B cell (primary cell): ENCODE measurements at regions of chr16 and their contacts with region 1.

Region 1: DNA sequence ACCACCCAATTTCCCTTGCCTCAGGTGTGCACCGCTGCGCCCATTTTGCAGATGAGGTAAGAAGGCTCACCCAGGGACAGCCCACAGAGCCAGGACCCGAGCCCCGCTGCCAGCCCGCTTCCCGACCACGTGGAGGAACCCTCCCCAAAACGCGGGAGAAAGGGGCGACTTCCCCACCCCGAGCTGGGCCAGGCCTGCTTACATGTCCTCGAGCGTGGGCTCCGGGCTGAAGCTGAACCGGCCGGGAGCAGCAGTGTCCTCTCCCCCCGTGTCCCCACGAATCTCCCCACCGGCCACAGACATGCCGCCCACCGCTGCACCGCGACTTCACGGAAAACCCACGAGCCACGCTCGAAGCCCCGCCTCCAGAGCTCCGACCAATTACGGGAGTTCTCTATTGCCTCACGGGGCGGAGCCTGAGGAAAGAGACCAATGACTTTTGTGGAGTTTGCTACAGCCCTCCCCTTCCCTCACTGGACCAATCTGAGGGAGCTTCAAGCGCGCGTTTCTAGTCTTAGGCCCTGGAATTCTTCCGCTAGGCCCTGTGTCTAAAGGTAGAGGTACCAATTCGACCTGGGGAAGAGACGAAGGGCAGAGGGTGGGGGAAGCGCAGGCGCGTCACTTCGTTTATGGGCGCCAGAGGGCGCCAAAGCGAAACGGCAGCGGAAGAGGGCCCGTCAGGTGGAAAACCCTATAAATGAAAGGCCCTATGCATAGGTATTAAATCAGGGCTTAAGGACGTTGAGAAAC is at the start of gene DCTPP1:
- DNase-seq: peak; percentile 99
- ATAC-seq: peak; percentile 97
- H3K4me3 ChIP-seq: peak within 1 kb of the TSS; percentile 78 to 98 (median 85)
- H3K4me3 Mint-ChIP-seq: no peak within 1 kb of the TSS
- H3K27ac ChIP-seq: peak within 1 kb of the TSS; percentile 79 to 86
- H3K27ac Mint-ChIP-seq: peak within 1 kb of the TSS; percentile 20
- H3K4me1 ChIP-seq: peaks cover 12 to 21% of the 10 kb centered on the region in 2 donors
- H3K4me1 Mint-ChIP-seq: peaks cover 17% of the 10 kb centered on the region
- H3K27me3 ChIP-seq: no peaks in the 10 kb centered on the region
- H3K27me3 Mint-ChIP-seq: no peaks in the 10 kb centered on the region
- CTCF ChIP-seq: peak; percentile 82
- total RNA-seq, gene DCTPP1: 25.0 and 28.9 TPM in 2 replicates

Region 2: DNA sequence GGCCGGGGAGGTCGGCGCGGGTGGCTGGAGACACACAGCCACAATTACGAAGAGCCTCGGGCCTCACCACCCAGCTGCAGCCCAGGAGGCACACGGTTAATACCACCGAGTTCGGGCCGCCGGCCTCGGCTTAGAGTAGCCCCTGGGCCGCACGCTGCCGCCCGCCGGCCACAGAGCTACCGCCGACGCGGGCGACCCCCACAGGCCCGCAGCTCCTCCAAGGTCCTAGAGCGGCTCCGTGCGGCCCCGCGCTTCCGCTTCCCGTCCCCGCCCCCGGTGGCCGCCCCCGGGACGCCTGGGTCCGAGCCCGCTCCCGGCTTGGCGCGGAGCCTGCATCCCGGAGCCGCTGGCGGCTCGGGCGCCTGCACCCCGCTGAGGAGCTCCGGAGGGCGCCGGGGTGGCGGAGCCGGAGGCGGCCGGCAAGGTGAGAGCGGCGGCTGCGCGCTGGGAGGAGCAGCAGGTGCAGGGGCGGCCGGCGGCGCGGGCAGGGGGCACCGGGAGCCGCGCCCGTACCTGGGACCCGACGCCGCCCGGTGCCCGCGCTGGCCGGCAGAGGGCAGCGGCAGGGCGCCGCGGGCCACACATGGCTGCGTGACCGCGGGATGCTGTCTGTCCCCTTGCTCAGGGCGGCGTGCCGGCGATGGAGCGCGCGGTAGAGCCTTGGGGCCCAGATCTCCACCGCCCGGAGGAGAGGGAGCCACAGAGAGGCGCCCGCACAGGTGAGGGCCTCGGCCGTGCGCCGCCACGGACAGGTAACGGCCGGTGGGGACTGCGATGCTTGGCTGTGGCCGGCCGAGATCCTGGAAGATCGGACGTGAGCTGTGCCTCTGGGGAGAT is 34.5 kb before region 1 on chr16 and contains the start of gene ZNF48:
- CTCF ChIA-PET with region 1: interaction called, 15 read pairs
- POLR2A ChIA-PET with region 1: no interaction called
- intact Hi-C with region 1: no loop called
- DNase-seq: peak; percentile 87
- ATAC-seq: peak; percentile 95
- H3K4me3 ChIP-seq: peak within 1 kb of the TSS; percentile 32 to 75 (median 66)
- H3K4me3 Mint-ChIP-seq: peak within 1 kb of the TSS; percentile 92
- H3K27ac ChIP-seq: peak within 1 kb of the TSS in 1 of 2 donors; percentile 64
- H3K27ac Mint-ChIP-seq: peak within 1 kb of the TSS; percentile 91
- H3K4me1 ChIP-seq: peaks cover 13 to 31% of the 10 kb centered on the region in 2 donors
- H3K4me1 Mint-ChIP-seq: peaks cover 23% of the 10 kb centered on the region
- H3K27me3 ChIP-seq: no peaks in the 10 kb centered on the region
- H3K27me3 Mint-ChIP-seq: no peaks in the 10 kb centered on the region
- CTCF ChIP-seq: peak; percentile 26
- total RNA-seq, gene ZNF48: 13.3 and 14.2 TPM in 2 replicates

Region 3: DNA sequence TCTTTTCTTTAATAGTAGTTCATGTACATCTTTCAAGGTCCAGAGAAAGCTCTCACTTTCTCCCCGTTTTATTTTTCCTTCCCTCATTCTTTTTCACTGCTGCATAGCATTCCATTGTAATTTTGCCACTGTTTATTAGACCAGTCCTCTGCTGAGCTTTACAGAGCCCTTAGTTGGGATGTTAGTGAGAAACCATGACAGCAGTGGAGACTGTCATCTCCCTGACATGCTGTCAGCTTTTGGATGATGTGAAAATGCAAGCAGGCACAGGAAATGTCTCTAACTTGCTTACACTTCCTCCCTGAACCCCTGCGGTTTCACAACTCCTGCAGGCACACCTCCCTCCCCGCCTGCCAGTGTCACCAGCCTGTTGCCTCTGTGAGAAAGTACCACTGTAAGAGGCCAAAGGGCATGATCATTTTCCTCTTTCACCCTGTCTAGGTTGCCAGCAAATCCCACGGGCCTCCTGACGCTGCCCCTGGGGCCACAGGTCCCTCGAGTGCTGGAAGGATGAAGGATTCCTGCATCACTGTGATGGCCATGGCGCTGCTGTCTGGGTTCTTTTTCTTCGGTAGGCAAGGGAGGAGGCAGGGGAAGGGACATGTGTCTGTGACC is 42.6 kb after region 1 on chr16 and contains the start of gene ITGAL:
- CTCF ChIA-PET with region 1: interaction called, 9 read pairs
- POLR2A ChIA-PET with region 1: interaction called, 6 read pairs
- intact Hi-C with region 1: loop called (anchors 5 kb)
- DNase-seq: peak; percentile 83
- ATAC-seq: peak; percentile 69
- H3K4me3 ChIP-seq: peak within 1 kb of the TSS; percentile 39 to 76 (median 59)
- H3K4me3 Mint-ChIP-seq: peak within 1 kb of the TSS; percentile 83
- H3K27ac ChIP-seq: peak within 1 kb of the TSS; percentile 70 to 82
- H3K27ac Mint-ChIP-seq: peak within 1 kb of the TSS; percentile 91
- H3K4me1 ChIP-seq: peaks cover 42 to 48% of the 10 kb centered on the region in 2 donors
- H3K4me1 Mint-ChIP-seq: peaks cover 47% of the 10 kb centered on the region
- H3K27me3 ChIP-seq: no peaks in the 10 kb centered on the region
- H3K27me3 Mint-ChIP-seq: no peaks in the 10 kb centered on the region
- CTCF ChIP-seq: no peak
- total RNA-seq, gene ITGAL: 176 and 184 TPM in 2 replicates

Region 4: GRCh38 chr16:30557957-30558788 is 128.3 kb after region 1 on chr16 and contains the start of gene ZNF764:
- CTCF ChIA-PET with region 1: interaction called, 6 read pairs
- POLR2A ChIA-PET with region 1: interaction called, 6 read pairs
- intact Hi-C with region 1: loop called (anchors 1 kb)
- DNase-seq: peak; percentile 97
- ATAC-seq: peak; percentile 92
- H3K4me3 ChIP-seq: peak within 1 kb of the TSS in 4 of 5 experiments; percentile 80 to 91 (median 88)
- H3K4me3 Mint-ChIP-seq: peak within 1 kb of the TSS; percentile 86
- H3K27ac ChIP-seq: peak within 1 kb of the TSS; percentile 95 to 97
- H3K27ac Mint-ChIP-seq: peak within 1 kb of the TSS; percentile 91
- H3K4me1 ChIP-seq: peaks cover 14 to 35% of the 10 kb centered on the region in 2 donors
- H3K4me1 Mint-ChIP-seq: peaks cover 42% of the 10 kb centered on the region
- H3K27me3 ChIP-seq: no peaks in the 10 kb centered on the region
- H3K27me3 Mint-ChIP-seq: no peaks in the 10 kb centered on the region
- CTCF ChIP-seq: no peak
- total RNA-seq, gene ZNF764: 19.7 and 20.9 TPM in 2 replicates

Region 5: GRCh38 chr16:30602616-30603277 is 172.9 kb after region 1 on chr16:
- CTCF ChIA-PET with region 1: interaction called, 41 read pairs
- POLR2A ChIA-PET with region 1: no interaction called
- intact Hi-C with region 1: loop called (anchors 1 kb)
- DNase-seq: no peak
- ATAC-seq: no peak
- H3K4me3 ChIP-seq: no peak overlapping the region
- H3K4me3 Mint-ChIP-seq: no peak overlapping the region
- H3K27ac ChIP-seq: no peak overlapping the region
- H3K27ac Mint-ChIP-seq: no peak overlapping the region
- H3K4me1 ChIP-seq: no peaks in the 10 kb centered on the region
- H3K4me1 Mint-ChIP-seq: peaks cover 3% of the 10 kb centered on the region
- H3K27me3 ChIP-seq: no peaks in the 10 kb centered on the region
- H3K27me3 Mint-ChIP-seq: no peaks in the 10 kb centered on the region
- CTCF ChIP-seq: no peak

Region 6: DNA sequence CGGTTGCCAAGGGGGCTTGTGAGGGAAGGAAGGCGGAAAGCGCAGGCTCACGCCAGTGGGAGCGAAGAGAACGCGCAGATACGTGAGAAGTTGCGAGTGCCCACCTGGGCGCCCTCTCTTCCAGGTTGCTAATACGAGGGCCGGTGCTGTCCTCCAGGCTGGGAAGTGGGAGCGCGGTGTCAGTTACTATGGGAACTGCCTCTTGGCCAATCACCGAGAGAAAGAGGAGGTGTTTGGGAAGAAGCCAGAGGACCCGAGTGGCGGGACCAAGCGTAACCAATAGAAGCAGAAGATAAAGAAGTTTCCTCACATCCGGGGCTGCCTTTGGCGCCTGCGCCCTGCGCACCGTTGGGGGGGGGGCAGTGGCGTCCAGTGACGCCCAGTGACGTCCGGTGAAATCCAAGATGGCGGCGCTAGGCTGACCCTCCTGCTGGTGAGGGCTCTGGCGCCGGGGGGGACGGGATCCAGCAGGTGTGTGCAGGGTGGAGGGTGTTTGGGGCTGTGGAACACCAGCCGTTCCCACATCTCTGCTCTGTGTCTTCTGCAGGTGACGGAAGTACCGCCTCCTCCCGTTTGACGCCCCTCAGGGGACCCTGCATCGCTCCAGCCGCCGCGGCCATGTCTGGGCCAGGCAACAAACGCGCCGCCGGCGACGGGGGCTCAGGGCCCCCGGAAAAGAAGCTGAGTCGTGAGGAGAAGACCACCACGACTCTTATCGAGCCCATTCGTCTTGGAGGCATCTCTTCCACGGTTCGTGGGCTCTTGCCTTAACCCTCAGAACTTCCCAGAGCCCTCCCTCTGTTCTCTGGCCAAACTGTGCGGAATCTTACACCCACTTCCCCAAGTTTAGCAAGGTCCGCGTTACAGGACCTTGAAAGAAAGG is 332.3 kb after region 1 on chr16 and contains the starts of genes CFAP119 and RNF40:
- CTCF ChIA-PET with region 1: no interaction called
- POLR2A ChIA-PET with region 1: no interaction called
- intact Hi-C with region 1: no loop called
- DNase-seq: peak; percentile 95
- ATAC-seq: peak; percentile 92
- H3K4me3 ChIP-seq: peak within 1 kb of the TSS; percentile 82 to 93 (median 90)
- H3K4me3 Mint-ChIP-seq: peak within 1 kb of the TSS; percentile 98
- H3K27ac ChIP-seq: peak within 1 kb of the TSS; percentile 57 to 91
- H3K27ac Mint-ChIP-seq: peak within 1 kb of the TSS; percentile 95
- H3K4me1 ChIP-seq: peaks cover 24 to 37% of the 10 kb centered on the region in 2 donors
- H3K4me1 Mint-ChIP-seq: peaks cover 36% of the 10 kb centered on the region
- H3K27me3 ChIP-seq: no peaks in the 10 kb centered on the region
- H3K27me3 Mint-ChIP-seq: no peaks in the 10 kb centered on the region
- CTCF ChIP-seq: no peak
- total RNA-seq, gene CFAP119: 9.3 and 11.7 TPM in 2 replicates
- total RNA-seq, gene RNF40: 120 and 121 TPM in 2 replicates